ENCODE measurements at regions of chr22 and their contacts with region 1.

Region 1: GRCh38 chr22:30634471-30635233 is 929 bp upstream of the SLC35E4 start:
- DNase-seq: peak; percentile 96
- CTCF ChIP-seq: peak; percentile 89

Region 2: GRCh38 chr22:30754971-30755756 is 120.5 kb after region 1 on chr22:
- in situ Hi-C with region 1: loop called (anchors 5 kb)
- DNase-seq: peak; percentile 83
- CTCF ChIP-seq: peak; percentile 85

Region 3: GRCh38 chr22:30890686-30891442 is 256.2 kb after region 1 on chr22:
- in situ Hi-C with region 1: loop called (anchors 25 kb)
- DNase-seq: peak; percentile 78
- CTCF ChIP-seq: peak; percentile 74

Measured in GM13977 (cell line).